ENCODE measurements at regions of chr1 and their contacts with region 1.

Region 1: DNA sequence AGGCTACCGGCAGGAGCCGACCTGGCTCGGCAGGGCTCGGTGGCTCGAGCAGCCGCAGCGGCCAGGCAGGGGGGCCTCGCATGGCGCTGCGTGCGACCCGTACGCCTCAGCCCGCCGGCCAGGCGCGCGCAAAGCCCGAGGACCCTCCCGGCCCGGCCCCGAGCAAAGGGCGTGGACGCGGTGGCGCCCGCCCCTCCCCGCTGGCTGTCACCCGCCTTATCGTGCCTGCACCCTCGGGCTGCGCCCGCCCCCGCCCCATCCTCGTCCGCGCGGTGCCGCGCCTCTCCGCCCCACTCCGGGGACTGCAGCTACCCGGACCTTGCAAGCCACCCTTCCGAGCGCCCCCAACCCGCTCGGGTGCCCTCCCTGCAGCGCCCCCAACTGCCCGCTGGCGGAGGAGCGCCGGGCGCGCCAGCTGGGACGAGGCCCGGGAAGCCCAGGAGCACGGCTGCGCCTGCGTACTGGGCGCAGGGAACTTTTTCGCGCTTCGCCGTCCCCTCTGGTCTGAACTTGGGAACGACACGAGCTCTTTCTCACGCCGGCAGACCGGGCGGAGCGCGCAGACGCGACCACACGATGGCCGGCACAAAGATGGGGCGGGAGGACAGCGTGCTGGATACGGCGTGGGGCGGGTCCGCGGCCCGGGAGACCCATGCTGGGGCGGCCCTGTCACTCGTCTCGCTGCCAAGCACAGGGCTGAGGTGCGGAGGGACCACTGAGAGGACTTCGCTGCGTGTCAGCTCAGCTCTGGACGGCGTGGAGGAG is at the start of gene ABCB10:
- DNase-seq: peak; percentile 92 to 99 (median 94)

Region 2: GRCh38 chr1:229164836-229165735 is 393.7 kb before region 1 on chr1:
- intact Hi-C with region 1: no loop called
- DNase-seq: no peak

Region 3: GRCh38 chr1:229258031-229258756 is 300.6 kb before region 1 on chr1:
- intact Hi-C with region 1: no loop called
- DNase-seq: peak in 8 of 10 donors; percentile 30 to 93 (median 76)

Region 4: DNA sequence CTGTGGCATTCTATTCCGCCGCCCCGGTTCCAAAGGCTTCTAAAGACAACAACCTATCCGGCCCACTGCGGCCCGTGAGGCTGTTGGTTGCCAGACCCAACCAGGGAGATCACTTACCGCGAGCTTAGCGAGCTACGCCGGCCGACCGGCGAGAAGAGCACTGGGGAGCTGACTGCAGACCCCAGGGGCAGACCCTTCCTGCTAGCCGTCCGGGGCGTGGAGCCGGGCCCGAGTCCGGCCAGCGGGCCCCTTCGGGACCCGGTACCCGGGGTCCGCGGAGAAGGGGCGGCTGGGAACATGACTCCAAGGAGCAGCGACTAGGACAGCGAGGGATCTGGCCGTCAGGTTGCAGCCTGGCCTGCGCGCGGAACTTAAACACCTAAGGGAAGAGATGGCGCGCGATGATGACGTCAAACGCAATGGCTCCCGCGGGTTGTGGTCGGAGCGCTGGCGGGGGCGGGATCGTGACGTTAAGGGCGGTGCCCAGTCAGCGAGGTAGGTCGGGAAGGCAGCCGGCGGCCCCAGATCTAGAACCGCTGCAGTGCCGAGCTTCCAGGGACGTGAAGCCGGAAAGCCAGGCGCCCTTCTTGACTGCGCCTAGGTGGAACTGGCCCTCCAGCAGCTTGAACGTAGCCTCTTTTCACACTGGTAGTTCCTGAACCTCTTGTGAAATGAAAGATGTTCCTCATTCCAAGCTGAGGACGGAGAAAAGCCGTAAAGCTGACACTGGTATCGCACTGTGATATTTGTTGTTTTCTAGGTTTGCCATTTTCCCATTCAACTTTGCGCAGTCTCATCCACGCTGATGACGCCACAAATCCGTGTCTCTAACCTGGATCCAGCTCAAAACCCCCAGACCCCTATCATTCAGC is 50.6 kb before region 1 on chr1 and contains the start of gene NUP133:
- intact Hi-C with region 1: loop called (anchors 2 kb)
- DNase-seq: peak; percentile 95 to 100 (median 99)

Region 5: DNA sequence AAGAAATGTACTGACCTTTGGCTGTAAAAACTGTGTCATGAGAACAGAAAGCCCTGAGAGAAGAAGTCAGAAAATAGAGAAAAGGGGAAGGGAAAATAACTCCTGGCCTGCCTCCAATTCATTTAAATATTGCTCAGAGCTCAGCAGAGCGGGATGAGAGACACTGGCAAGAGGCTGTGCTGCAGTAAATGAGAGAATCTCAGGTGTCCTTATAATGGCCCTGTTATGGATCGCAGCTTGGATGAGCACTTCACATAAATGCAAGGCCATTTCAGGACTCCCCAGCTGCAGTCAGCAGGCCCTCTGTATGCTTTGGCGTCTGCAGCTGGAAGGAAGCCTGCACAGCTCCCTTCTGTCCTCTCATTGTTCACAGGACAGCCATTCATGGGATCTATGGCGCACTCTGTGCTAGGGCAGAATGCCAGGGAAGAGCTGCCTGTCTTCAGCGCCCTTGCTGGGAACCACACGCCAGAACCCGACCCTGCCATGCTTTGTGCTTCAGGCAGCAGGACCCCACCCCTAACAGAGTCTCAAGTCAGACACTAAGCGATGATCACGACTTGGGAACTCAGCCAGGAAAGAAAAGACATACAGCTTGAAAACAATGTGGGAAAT is 20.4 kb after region 1 on chr1:
- intact Hi-C with region 1: loop called (anchors 2 kb)
- DNase-seq: peak; percentile 72 to 98 (median 86)

Region 6: GRCh38 chr1:229625915-229626831 is 67.4 kb after region 1 on chr1 and contains the starts of genes TAF5L and URB2:
- intact Hi-C with region 1: loop called (anchors 1 kb)
- DNase-seq: peak; percentile 76 to 99 (median 88)